ENCODE measurements at regions of chr11 and their contacts with region 1.

Region 1: GRCh38 chr11:58788355-58789023 is 56.0 kb downstream of the GLYATL2 start:
- DNase-seq: peak in 4 of 5 donors; percentile 36 to 49 (median 42)
- H3K4me3 ChIP-seq: no peak overlapping the region
- H3K4me3 Mint-ChIP-seq: no peak overlapping the region
- H3K27ac ChIP-seq: no peak overlapping the region
- H3K27ac Mint-ChIP-seq: no peak overlapping the region
- H3K4me1 ChIP-seq: no peaks in the 10 kb centered on the region
- H3K4me1 Mint-ChIP-seq: no peaks in the 10 kb centered on the region
- H3K27me3 ChIP-seq: no peaks in the 10 kb centered on the region
- H3K27me3 Mint-ChIP-seq: peaks cover 4 to 8% of the 10 kb centered on the region in 2 donors

Region 2: GRCh38 chr11:57763568-57763967 is 1024.9 kb before region 1 on chr11:
- CTCF ChIA-PET with region 1: no interaction called
- POLR2A ChIA-PET with region 1: no interaction called
- intact Hi-C with region 1: no loop called
- DNase-seq: no peak
- H3K4me3 ChIP-seq: no peak overlapping the region
- H3K4me3 Mint-ChIP-seq: no peak overlapping the region
- H3K27ac ChIP-seq: no peak overlapping the region
- H3K27ac Mint-ChIP-seq: no peak overlapping the region
- H3K4me1 ChIP-seq: no peaks in the 10 kb centered on the region
- H3K4me1 Mint-ChIP-seq: peaks cover 0 to 1% (median 0%) of the 10 kb centered on the region in 4 donors
- H3K27me3 ChIP-seq: no peaks in the 10 kb centered on the region
- H3K27me3 Mint-ChIP-seq: peaks cover 0 to 1% of the 10 kb centered on the region in 2 donors

Region 3: DNA sequence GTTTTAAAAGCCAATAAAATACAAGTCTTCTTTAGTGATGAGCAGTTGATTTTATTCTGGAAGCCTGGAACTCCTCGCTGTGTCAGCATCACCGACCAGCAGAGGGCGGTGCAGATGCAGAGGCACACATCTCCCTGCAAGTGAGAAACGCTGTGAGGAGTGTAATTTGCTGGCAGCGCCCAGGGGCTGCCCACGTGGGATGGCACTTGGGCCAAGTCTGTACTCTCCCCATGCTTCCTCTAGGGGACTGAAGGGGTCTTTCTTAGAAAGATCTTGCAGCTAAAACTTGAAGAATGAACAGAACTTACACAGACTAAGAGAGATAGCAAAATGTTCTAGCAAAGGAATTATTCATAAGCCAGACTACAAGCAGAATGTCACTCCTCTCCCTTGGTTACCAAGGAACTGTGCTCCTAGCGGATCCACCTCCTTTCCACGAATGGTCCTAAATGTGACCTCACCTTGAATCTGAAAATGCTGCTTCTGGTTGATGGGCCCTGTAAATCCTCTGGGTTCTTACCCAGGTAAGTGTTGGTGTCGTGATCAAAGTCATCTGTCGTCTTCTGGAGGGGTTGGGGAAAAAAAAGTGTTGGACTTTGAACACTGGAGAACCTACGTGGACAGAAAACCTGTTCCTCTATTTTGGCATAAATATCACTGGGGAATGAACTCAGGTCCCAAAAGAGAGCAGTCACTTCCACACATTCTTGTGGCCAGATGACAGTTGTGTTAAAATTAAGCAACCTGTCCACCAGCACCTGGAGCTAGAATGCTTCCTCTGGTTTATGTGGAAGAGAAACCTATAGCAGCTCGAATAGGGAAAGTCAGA is 134.2 kb before region 1 on chr11:
- CTCF ChIA-PET with region 1: interaction called, 58 read pairs
- POLR2A ChIA-PET with region 1: no interaction called
- intact Hi-C with region 1: loop called (anchors 1 kb)
- DNase-seq: peak; percentile 63 to 72 (median 66)
- H3K4me3 ChIP-seq: no peak overlapping the region
- H3K4me3 Mint-ChIP-seq: no peak overlapping the region
- H3K27ac ChIP-seq: no peak overlapping the region
- H3K27ac Mint-ChIP-seq: peak overlapping the region in 1 of 7 donors; percentile 11
- H3K4me1 ChIP-seq: no peaks in the 10 kb centered on the region
- H3K4me1 Mint-ChIP-seq: peaks cover 0 to 2% (median under 1%) of the 10 kb centered on the region in 4 donors
- H3K27me3 ChIP-seq: no peaks in the 10 kb centered on the region
- H3K27me3 Mint-ChIP-seq: peaks cover 0 to 5% of the 10 kb centered on the region in 2 donors

Region 4: DNA sequence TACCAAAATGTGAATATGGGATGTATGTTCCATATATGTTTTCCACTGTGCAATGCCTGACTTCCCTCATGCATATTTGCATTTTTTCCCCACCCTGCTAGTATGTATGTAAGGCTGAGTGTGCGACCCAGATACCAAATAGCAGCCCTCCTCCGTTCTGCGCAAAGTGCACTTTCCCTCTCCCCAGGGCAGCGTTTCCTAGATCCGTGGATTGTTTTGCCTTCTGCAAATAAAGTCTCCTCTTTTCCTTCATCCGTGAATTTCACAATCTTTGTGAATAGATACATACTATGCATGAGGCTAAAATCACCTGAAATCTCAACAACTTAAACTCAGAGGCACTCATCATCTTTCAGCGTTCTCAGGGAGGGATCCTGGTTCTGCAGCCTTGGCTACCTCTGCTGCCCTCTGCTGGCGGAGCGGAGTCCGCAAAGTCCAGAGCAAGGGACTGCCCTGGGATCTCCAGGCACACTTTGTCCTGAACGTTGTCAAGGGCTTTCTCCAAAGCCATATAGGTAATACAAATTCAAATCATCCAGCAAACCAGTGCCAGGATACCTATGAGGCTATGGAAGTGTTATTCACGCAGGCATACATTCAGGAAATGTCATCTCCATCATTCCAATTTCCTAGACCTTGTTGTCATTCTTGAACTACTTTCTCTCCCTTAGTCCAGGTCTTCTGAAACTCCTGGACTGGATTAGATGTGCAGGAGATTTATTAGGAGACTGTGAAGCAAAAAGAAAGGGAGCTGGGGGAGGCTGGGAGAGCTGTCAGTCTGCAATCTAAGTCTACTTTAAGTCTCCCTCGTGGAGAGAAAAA is 112.9 kb before region 1 on chr11:
- CTCF ChIA-PET with region 1: interaction called, 6 read pairs
- POLR2A ChIA-PET with region 1: no interaction called
- intact Hi-C with region 1: loop called (anchors 1 kb)
- DNase-seq: peak; percentile 46 to 64 (median 58)
- H3K4me3 ChIP-seq: no peak overlapping the region
- H3K4me3 Mint-ChIP-seq: no peak overlapping the region
- H3K27ac ChIP-seq: no peak overlapping the region
- H3K27ac Mint-ChIP-seq: no peak overlapping the region
- H3K4me1 ChIP-seq: no peaks in the 10 kb centered on the region
- H3K4me1 Mint-ChIP-seq: no peaks in the 10 kb centered on the region
- H3K27me3 ChIP-seq: peaks cover 5% of the 10 kb centered on the region
- H3K27me3 Mint-ChIP-seq: peaks cover 0 to 4% of the 10 kb centered on the region in 2 donors

Region 5: DNA sequence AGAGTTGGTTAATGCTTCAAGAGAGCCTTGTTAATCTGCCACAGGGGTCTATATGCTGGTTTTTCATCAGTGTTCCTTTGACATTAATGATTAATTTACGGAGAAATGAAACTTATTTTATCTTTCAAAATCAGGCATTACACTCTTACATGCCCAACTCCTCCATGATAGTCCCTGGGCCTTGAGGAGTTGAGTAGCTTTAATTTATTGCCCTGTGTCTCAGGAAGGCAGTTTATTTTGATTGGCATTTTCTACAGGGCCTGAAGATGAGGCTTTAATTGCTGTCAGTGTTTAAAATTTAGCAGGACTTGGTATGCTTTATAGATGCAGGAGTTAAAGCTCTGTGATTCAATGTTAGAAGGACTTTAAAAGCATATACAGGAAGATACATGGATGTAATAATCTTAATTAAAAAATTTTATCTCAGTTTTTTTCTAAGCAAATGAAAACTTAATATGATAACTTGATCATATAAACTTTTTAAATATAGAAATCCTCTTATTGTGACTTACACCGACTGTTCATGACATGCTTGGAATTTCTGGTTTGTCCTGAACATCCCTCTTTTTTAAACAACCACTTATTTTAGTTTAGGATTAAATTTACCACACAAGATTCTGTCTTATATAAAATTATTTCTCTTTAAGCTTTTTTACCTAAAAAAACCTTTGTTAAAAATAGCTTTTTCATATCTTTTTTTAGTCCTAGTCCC is 68.9 kb before region 1 on chr11:
- CTCF ChIA-PET with region 1: interaction called, 4 read pairs
- POLR2A ChIA-PET with region 1: no interaction called
- intact Hi-C with region 1: loop called (anchors 1 kb)
- DNase-seq: no peak
- H3K4me3 ChIP-seq: no peak overlapping the region
- H3K4me3 Mint-ChIP-seq: no peak overlapping the region
- H3K27ac ChIP-seq: no peak overlapping the region
- H3K27ac Mint-ChIP-seq: no peak overlapping the region
- H3K4me1 ChIP-seq: no peaks in the 10 kb centered on the region
- H3K4me1 Mint-ChIP-seq: no peaks in the 10 kb centered on the region
- H3K27me3 ChIP-seq: no peaks in the 10 kb centered on the region
- H3K27me3 Mint-ChIP-seq: no peaks in the 10 kb centered on the region

Region 6: GRCh38 chr11:59787816-59788215 is 999.3 kb after region 1 on chr11:
- CTCF ChIA-PET with region 1: no interaction called
- POLR2A ChIA-PET with region 1: no interaction called
- intact Hi-C with region 1: no loop called
- DNase-seq: no peak
- H3K4me3 ChIP-seq: no peak overlapping the region
- H3K4me3 Mint-ChIP-seq: no peak overlapping the region
- H3K27ac ChIP-seq: no peak overlapping the region
- H3K27ac Mint-ChIP-seq: peak overlapping the region in 3 of 7 donors; percentile 2 to 57 (median 25)
- H3K4me1 ChIP-seq: peaks cover 11% of the 10 kb centered on the region
- H3K4me1 Mint-ChIP-seq: peaks cover 14 to 35% (median 20%) of the 10 kb centered on the region in 4 donors
- H3K27me3 ChIP-seq: no peaks in the 10 kb centered on the region
- H3K27me3 Mint-ChIP-seq: no peaks in the 10 kb centered on the region

Measured in CD4-positive, alpha-beta memory T cell (primary cell).